Astrocyte of the cerebellum (primary cell): ENCODE measurements at regions of chr1 and their contacts with region 1.

Region 1: DNA sequence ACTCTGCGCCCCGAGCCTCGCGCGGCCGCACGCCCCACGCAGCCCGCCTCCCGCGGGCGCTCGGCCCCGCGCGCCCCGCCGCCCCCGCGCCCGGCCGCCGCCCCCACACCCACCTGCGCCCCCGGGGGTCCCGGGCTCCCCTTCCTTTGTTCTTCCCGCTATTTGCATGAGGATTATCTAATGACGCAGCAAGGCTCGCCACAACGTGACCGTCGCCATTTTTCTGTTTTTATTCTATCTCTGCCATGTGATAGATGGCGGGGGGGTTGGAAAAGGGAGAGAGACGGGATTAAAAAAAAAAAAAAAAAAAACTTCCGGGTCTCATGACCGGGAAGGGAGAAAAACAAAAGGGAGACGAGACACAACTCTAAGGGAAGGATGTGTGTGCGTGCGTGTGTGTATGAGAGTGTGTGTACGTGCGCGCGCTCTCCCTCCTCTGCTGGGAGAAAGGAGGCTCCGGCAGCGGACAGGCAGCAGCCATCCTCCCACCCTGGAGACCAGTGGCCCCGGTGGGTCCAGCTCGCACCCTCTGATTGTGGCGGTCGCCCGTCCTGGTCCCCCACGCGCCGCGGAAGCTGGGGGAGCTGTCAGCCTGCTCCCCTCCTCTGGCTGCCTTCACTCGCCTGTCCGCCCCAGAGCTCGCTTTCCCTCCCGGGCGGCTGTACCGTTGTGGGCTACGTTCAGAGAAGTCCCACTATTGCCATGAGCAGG is 80.4 kb upstream of the AK4 start:
- DNase-seq: peak; percentile 49
- H3K4me3 ChIP-seq: peak overlapping the region; percentile 81
- CTCF ChIP-seq: no peak

Region 2: GRCh38 chr1:65027666-65028358 is 39.8 kb before region 1 on chr1:
- in situ Hi-C with region 1: loop called (anchors 5 kb)
- DNase-seq: no peak
- H3K4me3 ChIP-seq: no peak overlapping the region
- CTCF ChIP-seq: no peak

Region 3: GRCh38 chr1:65141394-65141793 is 73.7 kb after region 1 on chr1:
- in situ Hi-C with region 1: no loop called
- DNase-seq: no peak
- H3K4me3 ChIP-seq: no peak overlapping the region
- CTCF ChIP-seq: no peak

Region 4: GRCh38 chr1:65209005-65209885 is 141.6 kb after region 1 on chr1:
- in situ Hi-C with region 1: loop called (anchors 5 kb)
- DNase-seq: peak; percentile 31
- H3K4me3 ChIP-seq: no peak overlapping the region
- CTCF ChIP-seq: peak; percentile 63